ENCODE measurements at regions of chr11 and their contacts with region 1.

Region 1: GRCh38 chr11:108497317-108498045 is 703 bp downstream of the POGLUT3 start:
- DNase-seq: peak; percentile 92 to 96
- H3K4me3 ChIP-seq: peak overlapping the region; percentile 74
- H3K4me3 Mint-ChIP-seq: peak overlapping the region; percentile 92
- H3K27ac Mint-ChIP-seq: peak overlapping the region; percentile 98
- H3K4me1 ChIP-seq: peaks cover 37% of the 10 kb centered on the region
- H3K4me1 Mint-ChIP-seq: peaks cover 43% of the 10 kb centered on the region
- H3K27me3 ChIP-seq: no peaks in the 10 kb centered on the region
- H3K27me3 Mint-ChIP-seq: no peaks in the 10 kb centered on the region
- CTCF ChIP-seq: no peak

Region 2: GRCh38 chr11:108147150-108147549 is 350.3 kb before region 1 on chr11:
- CTCF ChIA-PET with region 1: no interaction called
- POLR2A ChIA-PET with region 1: no interaction called
- intact Hi-C with region 1: no loop called
- DNase-seq: no peak
- H3K4me3 ChIP-seq: no peak overlapping the region
- H3K4me3 Mint-ChIP-seq: no peak overlapping the region
- H3K27ac Mint-ChIP-seq: no peak overlapping the region
- H3K4me1 ChIP-seq: no peaks in the 10 kb centered on the region
- H3K4me1 Mint-ChIP-seq: no peaks in the 10 kb centered on the region
- H3K27me3 ChIP-seq: no peaks in the 10 kb centered on the region
- H3K27me3 Mint-ChIP-seq: no peaks in the 10 kb centered on the region
- CTCF ChIP-seq: no peak

Region 3: GRCh38 chr11:108222686-108223448 is 274.6 kb before region 1 on chr11 and contains the start of gene ATM:
- CTCF ChIA-PET with region 1: no interaction called
- POLR2A ChIA-PET with region 1: interaction called, 7 read pairs
- intact Hi-C with region 1: loop called (anchors 2 kb)
- DNase-seq: peak; percentile 100
- H3K4me3 ChIP-seq: peak within 1 kb of the TSS; percentile 62
- H3K4me3 Mint-ChIP-seq: no peak within 1 kb of the TSS
- H3K27ac Mint-ChIP-seq: no peak within 1 kb of the TSS
- H3K4me1 ChIP-seq: peaks cover 19% of the 10 kb centered on the region
- H3K4me1 Mint-ChIP-seq: peaks cover 21% of the 10 kb centered on the region
- H3K27me3 ChIP-seq: no peaks in the 10 kb centered on the region
- H3K27me3 Mint-ChIP-seq: no peaks in the 10 kb centered on the region
- CTCF ChIP-seq: peak; percentile 86 to 98
- total RNA-seq, gene ATM: 77.1 and 77.9 TPM in 2 replicates

Region 4: GRCh38 chr11:108414958-108415357 is 82.5 kb before region 1 on chr11:
- CTCF ChIA-PET with region 1: no interaction called
- POLR2A ChIA-PET with region 1: no interaction called
- intact Hi-C with region 1: loop called (anchors 2 kb)
- DNase-seq: no peak
- H3K4me3 ChIP-seq: no peak overlapping the region
- H3K4me3 Mint-ChIP-seq: no peak overlapping the region
- H3K27ac Mint-ChIP-seq: no peak overlapping the region
- H3K4me1 ChIP-seq: no peaks in the 10 kb centered on the region
- H3K4me1 Mint-ChIP-seq: no peaks in the 10 kb centered on the region
- H3K27me3 ChIP-seq: no peaks in the 10 kb centered on the region
- H3K27me3 Mint-ChIP-seq: peaks cover 3% of the 10 kb centered on the region
- CTCF ChIP-seq: no peak

Region 5: DNA sequence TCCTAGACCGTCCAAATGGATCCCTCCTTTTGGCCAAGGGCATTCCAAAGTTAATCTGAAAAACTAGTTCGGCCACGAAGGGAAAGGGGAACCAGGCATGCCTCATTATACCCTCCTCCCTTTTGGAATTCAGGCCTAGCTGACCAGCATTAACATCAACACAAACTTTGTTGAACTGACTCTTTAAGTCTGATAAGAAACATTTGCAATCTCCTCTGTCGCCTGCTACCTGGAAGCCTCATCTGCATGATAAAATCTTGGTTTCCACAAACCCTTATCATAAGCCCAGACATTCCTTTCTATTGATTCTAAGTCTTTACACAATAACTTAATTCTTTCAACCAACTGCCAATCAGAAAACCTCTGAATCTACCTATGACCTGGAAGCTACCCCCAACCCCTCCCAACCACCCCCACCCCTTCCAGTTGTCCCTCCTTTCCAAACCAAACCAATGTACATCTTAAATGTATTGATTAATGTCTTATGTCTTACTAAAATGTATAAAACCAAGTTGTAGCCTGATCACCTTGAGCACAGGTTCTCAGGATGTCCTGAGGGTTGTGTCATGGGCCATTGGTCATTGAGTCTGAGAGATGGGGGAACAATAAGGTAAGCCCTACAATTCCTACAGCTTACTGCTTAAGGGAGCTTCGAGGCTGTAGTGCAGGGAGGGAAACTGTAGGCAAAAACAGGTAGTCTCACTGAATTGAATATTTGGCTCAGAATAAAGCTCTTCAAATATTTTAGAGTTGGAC is 10.5 kb before region 1 on chr11:
- CTCF ChIA-PET with region 1: no interaction called
- POLR2A ChIA-PET with region 1: interaction called, 3 read pairs
- intact Hi-C with region 1: loop called (anchors 1 kb)
- DNase-seq: peak; percentile 66 to 67
- H3K4me3 ChIP-seq: no peak overlapping the region
- H3K4me3 Mint-ChIP-seq: peak overlapping the region; percentile 53
- H3K27ac Mint-ChIP-seq: peak overlapping the region; percentile 90
- H3K4me1 ChIP-seq: peaks cover 28% of the 10 kb centered on the region
- H3K4me1 Mint-ChIP-seq: peaks cover 31% of the 10 kb centered on the region
- H3K27me3 ChIP-seq: no peaks in the 10 kb centered on the region
- H3K27me3 Mint-ChIP-seq: no peaks in the 10 kb centered on the region
- CTCF ChIP-seq: no peak

Region 6: DNA sequence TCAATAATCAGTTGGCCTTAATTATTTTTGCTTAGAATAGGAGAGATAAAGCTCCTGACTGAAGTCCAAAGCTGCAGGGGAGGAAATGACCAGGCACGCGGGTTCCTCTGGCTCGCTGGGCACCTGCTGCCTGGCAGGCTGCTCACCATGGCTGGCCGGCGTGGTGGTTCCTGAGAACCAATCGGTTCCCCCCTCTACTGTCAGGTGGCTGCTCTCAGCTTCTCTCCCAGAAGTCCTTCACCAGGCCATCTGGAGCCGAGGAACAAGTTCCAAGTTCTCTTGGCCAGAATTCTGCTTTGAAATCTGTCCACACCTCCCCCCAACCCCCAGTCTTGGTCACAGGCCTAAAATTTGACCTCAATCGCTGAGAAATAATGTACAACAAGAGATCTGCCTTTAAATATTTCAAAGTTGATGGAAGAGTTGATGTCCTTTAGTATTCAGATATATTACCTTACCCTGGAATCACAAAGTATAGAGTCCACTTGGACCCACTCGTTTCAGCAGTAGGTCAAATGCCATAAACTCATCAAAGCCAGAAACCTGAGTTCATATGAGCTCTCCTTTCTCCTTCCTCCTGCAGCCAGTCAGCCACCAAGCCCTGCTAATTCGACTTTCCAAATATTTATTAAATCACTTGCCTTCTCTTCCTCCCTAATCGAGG is 70.8 kb after region 1 on chr11:
- CTCF ChIA-PET with region 1: no interaction called
- POLR2A ChIA-PET with region 1: no interaction called
- intact Hi-C with region 1: loop called (anchors 5 kb)
- DNase-seq: no peak
- H3K4me3 ChIP-seq: no peak overlapping the region
- H3K4me3 Mint-ChIP-seq: no peak overlapping the region
- H3K27ac Mint-ChIP-seq: no peak overlapping the region
- H3K4me1 ChIP-seq: peaks cover 19% of the 10 kb centered on the region
- H3K4me1 Mint-ChIP-seq: peaks cover 24% of the 10 kb centered on the region
- H3K27me3 ChIP-seq: no peaks in the 10 kb centered on the region
- H3K27me3 Mint-ChIP-seq: no peaks in the 10 kb centered on the region
- CTCF ChIP-seq: no peak

Measured in Caco-2 (cell line).